ENCODE measurements at regions of chr11 and their contacts with region 1.

Region 1: DNA sequence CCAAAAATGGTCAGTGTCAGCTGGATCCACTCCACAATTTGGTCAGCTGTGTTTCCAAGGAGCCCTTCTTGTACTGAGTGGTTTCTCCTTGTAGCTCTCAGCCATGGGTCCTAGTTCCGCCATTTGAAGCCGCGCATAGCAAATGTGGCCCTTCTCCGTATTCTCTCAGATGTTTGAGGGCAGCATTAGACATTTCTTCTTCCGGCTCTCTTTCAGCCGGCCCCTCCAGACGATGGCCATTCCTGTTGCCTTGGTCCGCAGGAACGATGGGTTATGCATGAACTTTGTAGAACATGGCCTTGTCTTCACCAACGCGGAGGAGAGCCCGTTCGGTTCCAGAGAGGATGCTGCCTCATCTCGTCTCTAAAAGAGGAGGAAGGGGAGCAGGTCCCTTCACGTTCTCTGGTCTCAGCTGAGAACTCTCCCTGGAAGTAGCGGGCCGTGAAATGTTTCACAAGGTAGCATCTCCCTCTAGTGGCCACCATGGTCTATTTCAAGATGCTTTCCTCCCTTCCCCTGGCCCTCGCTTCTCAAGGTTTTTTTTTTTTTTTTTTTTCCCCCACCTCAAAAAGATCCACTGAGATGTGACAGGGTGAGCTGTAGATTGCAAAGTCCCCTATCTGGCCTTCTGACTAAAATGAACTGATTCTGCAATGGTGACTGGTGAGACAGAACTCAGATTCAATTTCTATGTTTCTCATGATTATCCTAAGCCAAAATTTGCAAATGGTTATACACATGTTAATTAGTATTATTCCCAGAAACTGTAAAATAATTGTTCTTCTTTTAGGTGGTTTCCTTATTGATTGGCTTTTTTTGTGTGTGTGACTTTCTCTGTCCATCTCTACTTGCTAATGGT is 19.8 kb upstream of the PLET1 start:
- DNase-seq: peak; percentile 82
- CTCF ChIP-seq: peak; percentile 77

Region 2: GRCh38 chr11:112113539-112114457 is 166.7 kb before region 1 on chr11:
- CTCF ChIA-PET with region 1: interaction called, 37 read pairs
- POLR2A ChIA-PET with region 1: no interaction called
- DNase-seq: peak; percentile 61
- CTCF ChIP-seq: peak; percentile 61

Region 3: DNA sequence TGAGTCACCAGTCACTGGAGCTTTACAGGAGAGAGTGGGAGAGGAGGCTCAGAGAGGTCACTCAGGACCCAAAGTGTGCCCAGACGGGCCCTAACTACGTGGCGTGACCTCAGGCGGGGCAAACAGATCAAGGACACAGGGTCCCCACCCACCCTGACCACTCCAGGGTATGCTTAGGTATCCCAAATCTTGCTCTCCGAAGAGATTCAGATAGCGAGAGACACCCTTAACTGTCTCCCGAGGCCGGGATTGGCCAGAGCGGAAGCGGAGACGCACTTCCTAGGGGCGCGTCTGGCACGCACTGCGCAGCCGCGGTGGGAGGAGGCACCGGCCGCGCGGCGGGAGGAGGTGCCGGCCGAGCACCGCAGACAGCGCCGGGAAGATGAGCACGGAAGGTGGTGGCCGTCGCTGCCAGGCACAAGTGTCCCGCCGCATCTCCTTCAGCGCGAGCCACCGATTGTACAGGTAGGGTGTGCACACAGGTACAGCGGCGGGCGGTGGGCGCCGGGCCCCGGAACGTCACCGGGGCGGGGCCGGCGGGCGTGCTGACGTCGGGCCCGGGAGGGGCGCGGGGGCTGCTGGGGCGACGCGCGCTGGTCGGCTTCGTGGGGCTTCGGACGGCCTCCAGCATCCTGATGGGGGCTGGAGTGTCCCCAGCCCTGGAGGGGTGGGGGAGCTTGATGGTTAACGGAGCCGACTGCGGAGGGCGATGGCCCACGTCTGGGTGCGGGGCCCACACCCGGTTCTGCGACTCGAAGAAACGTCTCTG is 54.3 kb before region 1 on chr11 and contains the start of gene PTS:
- CTCF ChIA-PET with region 1: interaction called, 374 read pairs
- POLR2A ChIA-PET with region 1: interaction called, 9 read pairs
- DNase-seq: peak; percentile 96
- CTCF ChIP-seq: no peak

Region 4: DNA sequence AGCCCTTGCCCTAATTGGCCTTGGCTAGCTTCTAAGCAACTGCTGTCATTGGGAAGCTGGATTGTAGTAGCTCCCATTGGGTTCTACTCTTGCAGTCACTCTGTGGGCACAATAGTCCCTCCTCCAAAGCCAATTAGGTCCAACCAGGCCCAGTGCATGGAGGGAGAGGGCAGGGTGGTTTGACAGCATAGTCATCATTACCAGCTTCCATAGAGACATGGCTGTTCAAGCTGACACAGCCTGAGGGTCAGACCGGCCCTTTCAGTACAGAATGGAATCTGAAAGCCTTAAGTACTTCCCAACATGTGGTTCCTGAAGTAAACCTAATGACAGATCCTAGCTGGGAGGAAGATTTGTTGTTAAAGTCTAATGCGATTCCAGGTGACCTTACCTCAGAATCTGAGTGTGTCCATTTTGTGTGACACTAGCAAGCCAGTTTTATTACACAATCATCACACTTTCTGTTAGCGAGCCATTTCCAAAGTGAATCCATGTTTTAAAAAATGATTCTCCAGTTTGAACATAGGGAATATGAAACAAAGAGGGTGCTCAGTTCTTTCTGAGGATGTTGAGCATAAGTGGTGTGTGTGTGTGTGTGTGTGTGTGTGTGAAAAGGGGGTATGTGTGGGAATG is 26.8 kb before region 1 on chr11:
- CTCF ChIA-PET with region 1: interaction called, 30 read pairs
- POLR2A ChIA-PET with region 1: no interaction called
- DNase-seq: no peak
- CTCF ChIP-seq: no peak

Region 5: GRCh38 chr11:113289431-113290187 is 1009.1 kb after region 1 on chr11:
- CTCF ChIA-PET with region 1: interaction called, 28 read pairs
- POLR2A ChIA-PET with region 1: no interaction called
- DNase-seq: peak; percentile 81
- CTCF ChIP-seq: peak; percentile 90

Measured in GM10248 (cell line).